Calu3 (cell line): ENCODE measurements at regions of chr12 and their contacts with region 1.

Region 1: GRCh38 chr12:98939350-98939749 is 294.3 kb downstream of the APAF1 start:
- DNase-seq: no peak
- H3K4me3 Mint-ChIP-seq: no peak overlapping the region
- H3K27ac Mint-ChIP-seq: no peak overlapping the region
- H3K4me1 Mint-ChIP-seq: no peaks in the 10 kb centered on the region
- H3K27me3 Mint-ChIP-seq: peaks cover 48% of the 10 kb centered on the region
- CTCF ChIP-seq: no peak

Region 2: DNA sequence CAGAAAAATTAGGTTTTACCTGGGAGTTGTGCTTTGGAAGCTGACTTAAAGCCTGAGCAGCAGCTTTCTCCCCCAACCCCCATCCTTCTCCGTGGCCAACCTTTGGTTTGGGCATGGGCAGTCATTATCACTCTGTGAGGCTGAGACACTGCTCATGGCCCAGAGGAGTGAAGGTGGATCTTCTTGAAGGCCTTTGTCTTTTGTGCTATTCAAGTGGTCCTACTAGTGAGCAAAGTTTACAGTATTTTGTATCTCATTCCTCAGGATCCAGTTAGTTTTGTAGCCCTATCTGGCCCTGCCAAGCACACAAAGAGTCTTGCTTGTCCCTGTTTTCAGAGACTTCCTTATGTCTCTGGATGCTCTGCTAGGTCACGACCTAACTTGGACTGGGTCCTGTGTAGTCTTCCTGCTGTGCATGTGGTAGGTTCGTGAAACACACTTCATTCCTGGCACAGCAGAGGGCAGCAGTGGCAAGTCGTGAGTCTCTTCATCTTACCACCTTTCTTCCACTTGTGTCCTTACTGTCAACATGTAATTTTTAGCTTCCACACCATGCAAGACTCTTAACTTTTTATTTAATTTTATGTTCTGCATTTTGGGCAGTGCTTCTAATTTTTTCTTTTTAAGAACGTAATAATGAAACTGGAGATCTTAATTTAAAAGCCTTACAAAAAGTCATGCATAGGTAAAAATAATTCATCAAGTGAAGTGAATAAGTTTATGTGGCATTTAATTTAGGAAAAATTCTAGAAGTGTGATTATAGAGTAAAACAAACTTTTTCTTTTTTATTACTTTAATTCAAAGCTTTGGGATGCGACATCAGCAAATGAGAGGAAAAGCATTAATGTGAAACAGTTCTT is 240.5 kb before region 1 on chr12:
- CTCF ChIA-PET with region 1: interaction called, 8 read pairs
- intact Hi-C with region 1: loop called (anchors 2 kb)
- DNase-seq: peak; percentile 49
- H3K4me3 Mint-ChIP-seq: no peak overlapping the region
- H3K27ac Mint-ChIP-seq: no peak overlapping the region
- H3K4me1 Mint-ChIP-seq: no peaks in the 10 kb centered on the region
- H3K27me3 Mint-ChIP-seq: no peaks in the 10 kb centered on the region
- CTCF ChIP-seq: peak; percentile 59

Region 3: DNA sequence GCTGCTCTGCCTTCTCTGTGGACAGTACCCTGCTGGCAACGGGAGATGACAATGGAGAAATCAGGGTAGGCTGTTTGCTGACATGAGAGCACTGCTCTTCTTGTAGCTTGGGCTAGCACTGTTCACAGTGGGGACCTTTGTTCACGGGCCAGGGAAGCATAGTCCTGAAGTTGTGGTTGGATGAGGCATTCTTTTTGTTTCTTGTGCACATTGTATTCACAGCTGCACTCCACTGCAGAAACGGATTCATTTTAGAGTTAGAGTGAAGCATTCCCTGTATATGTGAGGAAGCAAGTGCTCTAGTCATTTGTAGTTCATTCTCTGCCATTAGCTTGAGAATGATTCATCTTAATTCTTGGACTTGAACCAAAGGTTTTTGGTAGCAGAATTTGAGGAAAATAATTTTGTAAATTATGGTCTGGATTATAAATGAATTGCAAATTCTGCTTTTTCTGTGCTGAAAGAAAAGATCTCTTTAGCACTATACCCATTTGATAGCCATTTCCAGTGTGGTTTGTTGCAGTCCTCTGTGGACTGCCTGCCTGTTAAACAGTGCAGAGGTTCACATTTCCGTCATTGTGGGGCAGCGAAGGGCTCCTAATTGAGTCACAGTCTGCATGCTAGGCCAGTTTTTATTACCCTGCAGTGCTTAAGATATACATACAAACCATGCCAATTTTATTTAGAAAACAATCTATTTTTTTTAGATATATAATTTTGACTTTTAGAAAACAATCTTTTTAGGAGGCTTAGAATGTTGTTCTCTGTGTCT is 213.7 kb before region 1 on chr12:
- CTCF ChIA-PET with region 1: no interaction called
- intact Hi-C with region 1: loop called (anchors 5 kb)
- DNase-seq: peak; percentile 63
- H3K4me3 Mint-ChIP-seq: no peak overlapping the region
- H3K27ac Mint-ChIP-seq: no peak overlapping the region
- H3K4me1 Mint-ChIP-seq: no peaks in the 10 kb centered on the region
- H3K27me3 Mint-ChIP-seq: no peaks in the 10 kb centered on the region
- CTCF ChIP-seq: no peak